ENCODE measurements at regions of chr2 and their contacts with region 1.

Region 1: GRCh38 chr2:39455826-39456225 is 18.7 kb upstream of the MAP4K3 start:
- DNase-seq: no peak
- H3K4me3 ChIP-seq: no peak overlapping the region
- CTCF ChIP-seq: no peak
- POLR2A ChIP-seq: no peak

Region 2: GRCh38 chr2:38146275-38146906 is 1309.4 kb before region 1 on chr2:
- intact Hi-C with region 1: no loop called
- DNase-seq: no peak
- H3K4me3 ChIP-seq: no peak overlapping the region
- CTCF ChIP-seq: no peak
- POLR2A ChIP-seq: no peak

Region 3: DNA sequence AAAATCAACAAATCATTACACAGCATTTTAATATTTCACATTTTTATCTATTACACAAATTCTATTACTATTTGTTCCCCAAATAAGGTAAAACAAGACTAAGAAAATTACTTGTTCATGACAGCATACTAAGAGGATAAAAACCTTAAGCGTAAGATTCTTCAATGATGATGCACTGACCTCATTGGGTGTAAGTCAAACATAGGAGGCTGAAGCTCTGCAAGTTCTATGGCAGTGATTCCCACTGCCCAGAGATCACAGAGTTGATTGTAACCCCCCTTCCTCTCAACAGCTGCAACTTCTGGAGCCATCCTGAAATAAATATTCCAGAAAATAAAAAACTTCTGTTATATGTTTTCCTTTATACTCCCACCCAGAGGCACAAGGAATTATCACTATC is 129.9 kb before region 1 on chr2:
- intact Hi-C with region 1: no loop called
- DNase-seq: no peak
- H3K4me3 ChIP-seq: no peak overlapping the region
- CTCF ChIP-seq: no peak
- POLR2A ChIP-seq: no peak

Region 4: GRCh38 chr2:39443009-39443408 is 12.8 kb before region 1 on chr2:
- intact Hi-C with region 1: loop called (anchors 1 kb)
- DNase-seq: no peak
- H3K4me3 ChIP-seq: no peak overlapping the region
- CTCF ChIP-seq: no peak
- POLR2A ChIP-seq: no peak